ENCODE measurements at regions of chr9 and their contacts with region 1.

Region 1: DNA sequence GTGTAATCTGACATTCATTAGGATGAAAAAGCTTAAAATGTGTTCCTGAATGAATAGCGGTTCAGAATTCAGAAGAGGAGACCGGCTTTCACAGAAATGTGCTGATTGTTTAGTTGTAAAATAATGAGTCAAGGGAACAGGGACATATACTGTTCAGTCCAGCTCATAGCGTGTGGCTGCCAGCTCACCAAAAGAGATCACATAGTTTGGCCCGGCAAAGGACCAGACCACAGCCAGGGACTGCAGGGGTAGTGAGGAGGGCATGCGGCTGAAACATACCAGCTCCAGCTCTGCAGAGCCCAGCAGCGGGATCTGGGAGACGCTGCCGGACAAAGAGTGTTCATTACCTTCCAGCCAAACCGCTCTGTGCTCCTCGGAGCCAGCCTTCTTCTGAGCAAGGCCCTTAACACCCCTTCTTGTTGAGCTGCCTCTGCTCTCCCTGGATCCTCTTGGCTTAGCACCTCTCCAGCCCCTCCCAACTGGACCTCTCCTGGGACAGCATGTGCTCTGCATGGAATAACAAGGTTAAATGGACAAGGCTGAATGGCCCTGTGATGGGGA is 116.8 kb upstream of the CNTLN start:
- DNase-seq: peak; percentile 66 to 89
- ATAC-seq: peak; percentile 94 to 99 (median 97)
- H3K4me3 ChIP-seq: peak overlapping the region; percentile 35
- H3K27ac ChIP-seq: peak overlapping the region; percentile 73
- H3K4me1 ChIP-seq: no peaks in the 10 kb centered on the region
- H3K27me3 ChIP-seq: no peaks in the 10 kb centered on the region
- CTCF ChIP-seq: no peak

Region 2: GRCh38 chr9:16871356-16872151 is 146.5 kb before region 1 on chr9:
- intact Hi-C with region 1: loop called in 1 of 2 experiments (anchors 10 kb)
- DNase-seq: peak; percentile 63 to 79
- ATAC-seq: peak; percentile 52 to 62 (median 60)
- H3K4me3 ChIP-seq: peak overlapping the region; percentile 87
- H3K27ac ChIP-seq: peak overlapping the region; percentile 82
- H3K4me1 ChIP-seq: peaks cover 9% of the 10 kb centered on the region
- H3K27me3 ChIP-seq: peaks cover 0 to 3% (median 0%) of the 10 kb centered on the region in 3 donors
- CTCF ChIP-seq: no peak

Region 3: GRCh38 chr9:16901589-16901988 is 116.4 kb before region 1 on chr9:
- intact Hi-C with region 1: no loop called
- DNase-seq: no peak
- ATAC-seq: no peak
- H3K4me3 ChIP-seq: no peak overlapping the region
- H3K27ac ChIP-seq: no peak overlapping the region
- H3K4me1 ChIP-seq: no peaks in the 10 kb centered on the region
- H3K27me3 ChIP-seq: no peaks in the 10 kb centered on the region
- CTCF ChIP-seq: no peak

Measured in psoas muscle (tissue), 8 donors.